ENCODE measurements at regions of chr1 and their contacts with region 1.

Region 1: DNA sequence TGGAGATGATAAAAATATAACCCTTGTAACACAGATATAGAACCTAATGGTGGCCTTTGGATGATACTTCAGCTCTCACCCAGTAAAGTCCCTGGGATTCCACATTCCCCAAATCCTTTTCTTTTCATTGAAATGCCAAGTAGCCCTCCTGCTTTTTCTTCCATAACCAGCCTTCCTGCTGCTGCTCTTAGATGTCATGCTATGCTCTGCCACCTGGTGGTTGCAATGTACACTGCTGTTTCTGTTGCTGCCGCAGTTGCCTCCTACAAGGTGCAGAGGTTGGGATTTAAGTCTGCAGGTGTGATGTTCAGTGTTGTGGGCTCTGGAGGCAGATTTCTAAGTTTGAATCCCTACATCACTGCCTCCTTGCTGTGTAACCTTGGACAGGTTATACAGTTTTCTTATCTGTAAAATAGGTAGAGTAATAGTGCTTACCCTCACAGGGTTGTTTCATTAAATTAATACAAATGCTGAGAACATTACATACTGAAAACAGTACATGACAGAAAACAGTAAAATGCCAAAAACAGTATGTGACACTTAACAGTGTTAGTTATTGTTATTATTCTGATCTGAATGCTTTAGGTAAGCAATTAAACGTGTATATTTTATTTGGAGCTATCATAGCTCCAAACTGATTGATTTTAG is 64.3 kb downstream of the CAMSAP2 start:
- DNase-seq: peak; percentile 86
- H3K4me3 ChIP-seq: no peak overlapping the region
- H3K4me3 Mint-ChIP-seq: no peak overlapping the region
- H3K27ac Mint-ChIP-seq: no peak overlapping the region
- H3K4me1 ChIP-seq: peaks cover 6% of the 10 kb centered on the region; the same call in 1 of the 2 replicates
- H3K4me1 Mint-ChIP-seq: peaks cover 8% of the 10 kb centered on the region
- H3K27me3 ChIP-seq: no peaks in the 10 kb centered on the region
- H3K27me3 Mint-ChIP-seq: no peaks in the 10 kb centered on the region
- CTCF ChIP-seq: peak; percentile 92 to 97

Region 2: GRCh38 chr1:200558866-200559459 is 244.0 kb before region 1 on chr1:
- CTCF ChIA-PET with region 1: interaction called, 3 read pairs
- POLR2A ChIA-PET with region 1: no interaction called
- intact Hi-C with region 1: loop called (anchors 2 kb)
- DNase-seq: peak in 1 of 2 experiments; percentile 35
- H3K4me3 ChIP-seq: no peak overlapping the region
- H3K4me3 Mint-ChIP-seq: no peak overlapping the region
- H3K27ac Mint-ChIP-seq: no peak overlapping the region
- H3K4me1 ChIP-seq: no peaks in the 10 kb centered on the region; the same call in 1 of the 2 replicates
- H3K4me1 Mint-ChIP-seq: peaks cover 7% of the 10 kb centered on the region
- H3K27me3 ChIP-seq: no peaks in the 10 kb centered on the region
- H3K27me3 Mint-ChIP-seq: no peaks in the 10 kb centered on the region
- CTCF ChIP-seq: peak; percentile 62 to 75

Region 3: DNA sequence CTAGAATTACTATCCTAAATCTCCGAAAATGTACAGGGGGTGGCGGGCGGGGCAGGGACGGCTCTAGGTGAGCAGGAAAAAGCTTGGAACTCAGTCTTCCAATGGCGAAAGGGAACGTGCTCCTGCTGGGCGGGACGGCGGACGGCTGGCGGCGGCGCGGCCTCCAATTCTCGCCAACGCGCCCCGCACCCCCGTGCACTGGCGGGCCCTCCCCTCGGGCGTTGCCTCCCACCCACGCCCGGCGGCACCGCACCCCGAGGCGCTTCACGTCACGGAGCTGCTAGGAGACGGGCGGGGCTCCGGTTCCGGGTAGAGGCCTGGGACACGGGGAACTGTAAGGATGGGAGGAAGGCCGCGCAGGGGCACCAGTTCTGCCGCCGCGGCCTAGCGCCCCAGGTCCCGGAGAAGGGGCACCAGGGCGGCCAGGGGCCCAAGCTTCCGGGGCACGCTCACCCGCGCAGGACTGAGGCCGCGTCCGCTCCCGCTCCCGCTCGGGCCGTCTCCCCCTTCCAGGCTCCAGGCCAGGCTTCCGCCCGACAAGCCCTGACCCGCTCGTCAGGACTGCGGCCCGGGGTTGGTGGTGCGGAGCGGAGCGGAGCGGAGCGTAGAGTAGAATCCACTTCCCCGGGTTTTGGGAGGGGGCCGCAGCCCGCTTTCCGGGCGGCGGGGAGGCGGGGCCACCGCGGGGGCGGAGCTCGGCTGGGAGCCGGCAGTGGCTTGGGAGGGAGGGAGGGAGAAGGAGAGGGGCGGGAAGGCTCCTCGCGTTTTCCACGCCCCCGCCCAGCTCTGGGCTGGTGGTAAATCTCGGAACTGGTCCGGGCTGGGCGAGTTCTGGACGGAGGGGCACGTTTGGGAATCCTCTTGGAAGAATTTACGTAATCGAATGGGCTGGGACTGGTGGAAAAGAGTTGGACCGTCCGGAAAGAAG is 133.4 kb before region 1 on chr1 and contains the start of gene DDX59:
- CTCF ChIA-PET with region 1: no interaction called
- POLR2A ChIA-PET with region 1: no interaction called
- intact Hi-C with region 1: loop called (anchors 1 kb)
- DNase-seq: peak; percentile 97
- H3K4me3 ChIP-seq: peak within 1 kb of the TSS; percentile 97
- H3K4me3 Mint-ChIP-seq: peak within 1 kb of the TSS; percentile 99
- H3K27ac Mint-ChIP-seq: peak within 1 kb of the TSS; percentile 99
- H3K4me1 ChIP-seq: peaks cover 16% of the 10 kb centered on the region
- H3K4me1 Mint-ChIP-seq: peaks cover 10% of the 10 kb centered on the region
- H3K27me3 ChIP-seq: no peaks in the 10 kb centered on the region
- H3K27me3 Mint-ChIP-seq: no peaks in the 10 kb centered on the region
- CTCF ChIP-seq: no peak
- total RNA-seq, gene DDX59: 13.5 and 16.3 TPM in 2 replicates

Region 4: DNA sequence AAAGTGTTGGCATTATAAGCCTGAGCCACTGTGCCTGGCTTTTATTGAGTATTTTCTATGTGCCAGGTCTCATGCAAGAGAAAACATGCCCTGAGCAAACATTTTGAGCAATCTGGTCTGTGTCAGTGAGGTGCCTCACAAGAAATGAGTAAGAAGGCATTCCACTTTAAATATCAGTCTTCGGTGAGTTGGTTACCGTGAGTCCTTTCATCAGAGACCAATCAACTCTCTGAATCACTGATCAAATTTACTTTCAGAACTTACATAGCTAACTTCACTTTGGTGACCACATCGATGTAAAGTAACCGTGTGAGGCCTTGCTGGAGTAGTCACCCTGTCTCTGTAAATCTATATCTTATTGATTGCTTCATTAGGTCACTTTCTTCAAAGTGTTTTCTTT is 119.0 kb before region 1 on chr1:
- CTCF ChIA-PET with region 1: no interaction called
- POLR2A ChIA-PET with region 1: no interaction called
- intact Hi-C with region 1: no loop called
- DNase-seq: no peak
- H3K4me3 ChIP-seq: no peak overlapping the region
- H3K4me3 Mint-ChIP-seq: no peak overlapping the region
- H3K27ac Mint-ChIP-seq: no peak overlapping the region
- H3K4me1 ChIP-seq: no peaks in the 10 kb centered on the region
- H3K4me1 Mint-ChIP-seq: no peaks in the 10 kb centered on the region
- H3K27me3 ChIP-seq: no peaks in the 10 kb centered on the region
- H3K27me3 Mint-ChIP-seq: no peaks in the 10 kb centered on the region
- CTCF ChIP-seq: no peak

Measured in Caco-2 (cell line).